Left colon (tissue), 2 donors: ENCODE measurements at regions of chr18 and their contacts with region 1.

Region 1: GRCh38 chr18:44819944-44820510 is 139.3 kb downstream of the SETBP1 start:
- DNase-seq: no peak
- ATAC-seq: no peak

Region 2: GRCh38 chr18:44458777-44459176 is 361.2 kb before region 1 on chr18:
- intact Hi-C with region 1: no loop called
- DNase-seq: no peak
- ATAC-seq: no peak

Region 3: DNA sequence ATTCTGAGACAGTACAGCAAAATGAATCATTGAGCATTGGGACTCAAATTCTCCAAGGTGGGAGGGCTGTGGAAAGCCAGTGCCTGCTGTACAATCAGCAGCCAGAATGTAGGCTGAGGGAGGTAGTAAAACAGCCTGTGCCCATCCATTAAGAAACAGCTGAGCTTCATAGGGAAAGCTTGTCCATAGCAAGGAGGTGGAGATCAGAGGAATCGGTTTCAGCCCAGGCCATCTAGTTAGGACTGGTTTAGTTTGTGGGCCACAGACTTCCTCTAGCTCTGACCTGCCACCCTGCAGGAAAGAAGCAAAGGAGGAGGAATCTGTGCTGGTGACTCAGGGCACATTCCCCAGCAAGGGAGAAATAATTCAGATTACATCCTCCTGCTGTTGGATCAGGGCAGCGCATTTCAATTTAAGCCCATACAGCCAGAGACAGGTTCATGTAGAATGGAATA is 194.0 kb after region 1 on chr18:
- intact Hi-C with region 1: loop called in 1 of 2 experiments (anchors 10 kb)
- DNase-seq: peak in 1 of 2 donors; percentile 40
- ATAC-seq: no peak